CD14-positive monocyte (primary cell): ENCODE measurements at regions of chr11 and their contacts with region 1.

Region 1: DNA sequence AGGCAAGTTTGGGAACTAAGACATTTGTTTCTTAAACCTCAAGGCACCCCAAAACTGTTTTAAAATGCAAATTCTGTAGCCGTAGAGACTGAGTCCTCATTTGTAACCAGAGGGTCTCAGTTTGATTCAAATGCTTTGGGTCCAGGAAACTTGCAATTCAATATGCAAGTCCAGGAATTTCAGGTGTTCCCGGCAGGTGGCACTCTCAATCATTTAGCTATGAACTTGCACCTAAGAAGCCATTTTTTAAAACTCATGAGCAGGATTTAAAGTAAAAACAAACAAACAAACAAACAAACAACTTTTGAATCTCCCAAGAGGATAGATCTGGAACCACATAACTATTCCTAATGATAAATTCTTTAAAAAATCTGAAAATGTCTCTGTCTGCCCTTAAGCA is 8.7 kb upstream of the ABTB2 start:
- DNase-seq: peak in 1 of 3 donors; percentile 16
- H3K4me3 ChIP-seq: no peak overlapping the region
- H3K4me3 Mint-ChIP-seq: no peak overlapping the region
- H3K27ac ChIP-seq: no peak overlapping the region
- H3K27ac Mint-ChIP-seq: no peak overlapping the region
- H3K4me1 ChIP-seq: peaks cover 4 to 7% of the 10 kb centered on the region in 2 donors
- H3K4me1 Mint-ChIP-seq: peaks cover 5% of the 10 kb centered on the region
- H3K27me3 ChIP-seq: no peaks in the 10 kb centered on the region
- H3K27me3 Mint-ChIP-seq: peaks cover 0 to 1% (median 1%) of the 10 kb centered on the region in 3 donors
- CTCF ChIP-seq: no peak

Region 2: DNA sequence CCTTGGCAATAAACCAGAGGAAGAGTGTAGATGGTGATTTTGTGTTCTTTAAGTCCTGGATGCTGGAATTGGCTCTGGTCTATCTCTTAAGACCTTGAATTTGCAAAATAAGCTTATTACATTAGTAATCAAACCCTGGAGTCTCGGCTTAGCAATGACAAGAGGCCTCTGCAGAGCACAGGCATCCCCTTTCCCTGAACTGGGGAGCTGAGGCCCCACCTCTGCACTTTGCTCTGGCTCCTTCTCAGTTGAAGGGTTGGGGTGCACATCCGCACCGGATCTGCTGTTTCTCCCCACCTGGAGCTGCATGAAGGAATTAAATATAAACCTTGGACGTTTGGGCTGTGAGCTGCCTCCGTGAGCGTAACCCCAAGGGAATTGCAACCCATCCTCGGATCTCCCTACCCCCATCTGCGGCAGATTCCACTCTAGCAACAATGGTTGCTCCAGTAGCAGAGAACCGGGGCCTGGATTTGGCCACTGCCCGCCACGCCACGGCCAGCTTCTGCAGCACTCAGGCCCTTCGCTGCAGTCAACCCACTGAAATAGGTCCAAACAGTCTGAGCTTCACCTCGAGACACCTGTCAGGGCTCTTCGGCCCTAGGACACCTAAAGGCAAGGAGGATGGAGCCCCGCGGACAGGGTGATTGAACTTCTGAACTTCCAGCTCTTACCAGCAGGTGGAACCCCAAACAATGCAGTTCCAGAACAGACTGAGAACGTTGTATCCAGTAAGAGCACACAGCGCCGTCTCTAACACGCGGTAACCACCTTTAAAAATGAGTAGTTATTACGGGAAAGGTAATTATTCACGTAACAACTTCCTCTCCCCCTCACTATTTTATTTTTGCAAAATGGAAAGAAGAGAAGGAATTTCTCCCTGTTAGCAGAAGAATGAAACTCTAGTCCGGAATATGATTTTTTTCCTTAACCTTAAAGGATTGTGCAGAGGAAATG is 369.7 kb before region 1 on chr11:
- intact Hi-C with region 1: loop called in 1 of 2 experiments (anchors 10 kb)
- DNase-seq: peak; percentile 48 to 70 (median 68)
- H3K4me3 ChIP-seq: no peak overlapping the region
- H3K4me3 Mint-ChIP-seq: peak overlapping the region in 1 of 2 donors; percentile 52
- H3K27ac ChIP-seq: no peak overlapping the region
- H3K27ac Mint-ChIP-seq: no peak overlapping the region
- H3K4me1 ChIP-seq: no peaks in the 10 kb centered on the region
- H3K4me1 Mint-ChIP-seq: peaks cover 8% of the 10 kb centered on the region
- H3K27me3 ChIP-seq: peaks cover 0 to 14% of the 10 kb centered on the region in 2 donors
- H3K27me3 Mint-ChIP-seq: peaks cover 10 to 20% (median 19%) of the 10 kb centered on the region in 3 donors
- CTCF ChIP-seq: peak; percentile 90

Region 3: GRCh38 chr11:34302046-34302921 is 64.2 kb before region 1 on chr11:
- intact Hi-C with region 1: no loop called
- DNase-seq: peak in 1 of 3 donors; percentile 52
- H3K4me3 ChIP-seq: no peak overlapping the region
- H3K4me3 Mint-ChIP-seq: no peak overlapping the region
- H3K27ac ChIP-seq: peak overlapping the region in 1 of 2 donors; percentile 81
- H3K27ac Mint-ChIP-seq: peak overlapping the region in 2 of 7 donors; percentile 26 to 37
- H3K4me1 ChIP-seq: peaks cover 31 to 33% of the 10 kb centered on the region in 2 donors
- H3K4me1 Mint-ChIP-seq: peaks cover 32% of the 10 kb centered on the region
- H3K27me3 ChIP-seq: no peaks in the 10 kb centered on the region
- H3K27me3 Mint-ChIP-seq: no peaks in the 10 kb centered on the region
- CTCF ChIP-seq: no peak

Region 4: DNA sequence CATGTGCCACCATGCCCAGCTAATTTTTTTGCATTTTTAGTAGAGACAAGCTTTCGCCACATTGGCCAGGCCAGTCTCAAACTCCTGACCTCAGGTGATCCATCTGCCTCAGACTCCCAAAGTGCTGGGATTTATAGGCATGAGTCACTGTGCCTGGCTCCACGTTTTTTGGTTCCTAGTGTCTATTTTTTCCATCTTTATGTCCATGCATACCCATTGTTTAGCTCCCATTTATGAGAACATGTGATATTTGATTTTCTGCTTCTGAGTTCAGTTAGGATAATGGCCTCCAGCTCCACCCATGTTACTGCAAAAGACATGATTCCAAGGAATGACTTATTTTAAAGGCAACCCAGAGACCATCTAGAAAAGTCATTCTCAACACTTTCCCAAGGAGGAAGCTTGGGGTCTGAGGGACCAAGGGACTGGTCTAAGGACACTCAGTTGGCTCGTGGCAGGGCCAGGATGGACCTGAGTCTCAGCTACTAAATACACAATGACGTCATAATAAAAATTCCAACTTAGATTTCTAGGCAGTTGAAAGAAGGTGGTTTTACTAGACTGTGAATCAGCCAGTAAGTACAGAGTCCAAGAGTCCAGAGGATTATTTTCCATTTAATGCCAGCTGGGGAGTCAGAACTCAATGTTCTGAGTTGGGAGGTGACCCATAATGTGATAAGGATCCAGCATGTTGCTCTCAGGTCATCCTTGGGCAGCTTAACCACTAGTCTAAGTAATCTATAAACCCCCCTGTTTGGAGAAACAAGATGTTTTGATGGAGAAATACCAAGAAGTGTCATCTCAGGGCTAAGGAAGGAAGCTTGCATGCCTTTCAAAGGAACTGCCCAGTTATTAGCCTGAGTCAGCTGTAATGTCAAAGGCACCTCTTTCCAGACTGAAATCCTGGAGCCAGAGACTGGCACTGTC is 48.1 kb before region 1 on chr11:
- intact Hi-C with region 1: no loop called
- DNase-seq: peak in 1 of 3 donors; percentile 35
- H3K4me3 ChIP-seq: no peak overlapping the region
- H3K4me3 Mint-ChIP-seq: no peak overlapping the region
- H3K27ac ChIP-seq: peak overlapping the region in 1 of 2 donors; percentile 24
- H3K27ac Mint-ChIP-seq: peak overlapping the region in 2 of 7 donors; percentile 56 to 64
- H3K4me1 ChIP-seq: peaks cover 10% of the 10 kb centered on the region in 2 donors
- H3K4me1 Mint-ChIP-seq: peaks cover 17% of the 10 kb centered on the region
- H3K27me3 ChIP-seq: no peaks in the 10 kb centered on the region
- H3K27me3 Mint-ChIP-seq: peaks cover 2 to 4% (median 3%) of the 10 kb centered on the region in 3 donors
- CTCF ChIP-seq: no peak

Region 5: DNA sequence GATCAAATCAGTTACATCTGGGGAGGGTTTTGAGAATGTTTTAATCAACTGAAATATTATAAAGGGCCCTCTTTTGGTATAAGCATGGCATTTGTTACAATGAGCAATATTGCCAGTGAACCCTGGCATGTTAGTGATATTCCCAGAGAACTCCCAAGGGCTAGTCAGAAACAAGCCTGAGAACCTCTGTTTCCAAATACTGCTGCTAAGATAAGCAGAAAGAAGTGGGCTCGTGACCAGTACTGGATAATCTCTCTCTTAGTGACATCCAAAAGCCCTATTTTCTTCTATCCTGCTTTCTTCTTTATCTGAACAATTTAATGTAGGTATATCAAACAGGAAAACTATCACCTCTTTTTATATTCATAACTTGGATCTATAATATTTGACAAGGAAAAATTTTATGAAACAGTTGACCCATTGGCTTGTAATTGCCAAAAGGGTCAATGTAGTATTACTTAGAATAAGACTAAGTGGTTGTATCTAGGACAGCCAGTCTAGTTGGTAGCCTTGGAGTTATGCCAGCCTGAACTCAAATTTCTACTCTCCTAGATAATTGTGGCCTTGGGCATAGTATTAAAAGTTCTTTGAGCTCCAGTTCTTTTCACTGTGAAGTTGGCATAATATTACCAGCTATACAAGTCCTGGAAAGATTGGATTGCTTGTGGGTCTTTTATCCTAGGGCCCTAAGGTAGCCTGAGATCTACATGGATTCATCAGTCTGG is 87.9 kb after region 1 on chr11:
- intact Hi-C with region 1: loop called in 1 of 2 experiments (anchors 10 kb)
- DNase-seq: no peak
- H3K4me3 ChIP-seq: no peak overlapping the region
- H3K4me3 Mint-ChIP-seq: no peak overlapping the region
- H3K27ac ChIP-seq: peak overlapping the region in 1 of 2 donors; percentile 8
- H3K27ac Mint-ChIP-seq: no peak overlapping the region
- H3K4me1 ChIP-seq: peaks cover 27 to 30% of the 10 kb centered on the region in 2 donors
- H3K4me1 Mint-ChIP-seq: peaks cover 28% of the 10 kb centered on the region
- H3K27me3 ChIP-seq: no peaks in the 10 kb centered on the region
- H3K27me3 Mint-ChIP-seq: no peaks in the 10 kb centered on the region
- CTCF ChIP-seq: no peak